H1 (cell line): ENCODE measurements at regions of chr3 and their contacts with region 1.

Region 1: DNA sequence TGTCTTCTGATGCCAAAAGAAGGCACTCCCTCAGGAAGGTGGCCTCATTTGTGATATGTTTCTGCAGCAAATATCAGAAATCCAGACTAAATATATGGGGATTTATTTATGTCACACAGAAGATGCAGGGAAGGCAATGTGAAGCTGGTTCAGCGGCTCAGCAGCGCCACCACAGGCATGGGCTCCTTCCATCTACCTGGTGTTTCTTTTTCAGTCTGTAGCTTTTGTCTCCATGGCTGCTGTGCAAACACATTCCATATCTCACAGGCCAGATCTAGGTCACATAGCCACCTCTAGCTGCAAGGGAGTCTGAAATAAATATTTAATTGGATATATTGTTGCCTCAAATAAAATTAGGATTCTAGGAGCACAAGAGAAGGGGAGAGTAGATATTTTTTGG is 502.0 kb upstream of the IL12A start:
- DNase-seq: peak; percentile 17 to 52
- H3K4me3 ChIP-seq: no peak overlapping the region
- H3K27ac ChIP-seq: no peak overlapping the region
- H3K4me1 ChIP-seq: no peaks in the 10 kb centered on the region
- H3K27me3 ChIP-seq: peaks cover 0 to 1% (median 0%) of the 10 kb centered on the region in 4 experiments; a peak in 1 of 7 replicates
- CTCF ChIP-seq: peak; percentile 52 to 91 (median 82)
- EP300 ChIP-seq: 0 out of 3 replicates have a peak, but pooled peaks of 1 of the 2 experiments have one; percentile 54
- POLR2A ChIP-seq: no peak
- RAD21 ChIP-seq: peak; percentile 67 to 70

Region 2: DNA sequence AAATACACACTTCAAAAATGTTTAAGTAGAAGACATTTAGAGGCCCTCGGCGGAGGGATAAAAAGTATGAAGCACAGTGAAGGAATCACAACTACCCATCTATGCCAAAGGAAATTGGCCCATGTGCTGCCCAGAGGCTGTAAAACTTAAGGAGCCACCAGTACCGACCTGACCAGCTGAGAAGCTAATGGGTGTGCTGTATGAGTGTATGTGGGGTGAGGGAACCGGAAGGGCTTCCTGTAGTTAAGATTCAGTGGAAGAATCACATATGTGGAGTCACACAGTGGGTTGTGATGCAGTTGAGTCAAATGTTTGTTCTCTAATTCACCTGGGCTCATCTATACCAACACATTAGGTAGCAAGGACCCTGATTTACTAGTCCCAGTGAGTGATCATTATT is 14.0 kb before region 1 on chr3:
- CTCF ChIA-PET with region 1: interaction called, 33 read pairs
- POLR2A ChIA-PET with region 1: no interaction called
- DNase-seq: no peak
- H3K4me3 ChIP-seq: no peak overlapping the region
- H3K27ac ChIP-seq: no peak overlapping the region
- H3K4me1 ChIP-seq: no peaks in the 10 kb centered on the region
- H3K27me3 ChIP-seq: no peaks in the 10 kb centered on the region
- CTCF ChIP-seq: no peak
- EP300 ChIP-seq: no peak
- POLR2A ChIP-seq: no peak
- RAD21 ChIP-seq: no peak